PC-3 (cell line): ENCODE measurements at regions of chr1 and their contacts with region 1.

Region 1: DNA sequence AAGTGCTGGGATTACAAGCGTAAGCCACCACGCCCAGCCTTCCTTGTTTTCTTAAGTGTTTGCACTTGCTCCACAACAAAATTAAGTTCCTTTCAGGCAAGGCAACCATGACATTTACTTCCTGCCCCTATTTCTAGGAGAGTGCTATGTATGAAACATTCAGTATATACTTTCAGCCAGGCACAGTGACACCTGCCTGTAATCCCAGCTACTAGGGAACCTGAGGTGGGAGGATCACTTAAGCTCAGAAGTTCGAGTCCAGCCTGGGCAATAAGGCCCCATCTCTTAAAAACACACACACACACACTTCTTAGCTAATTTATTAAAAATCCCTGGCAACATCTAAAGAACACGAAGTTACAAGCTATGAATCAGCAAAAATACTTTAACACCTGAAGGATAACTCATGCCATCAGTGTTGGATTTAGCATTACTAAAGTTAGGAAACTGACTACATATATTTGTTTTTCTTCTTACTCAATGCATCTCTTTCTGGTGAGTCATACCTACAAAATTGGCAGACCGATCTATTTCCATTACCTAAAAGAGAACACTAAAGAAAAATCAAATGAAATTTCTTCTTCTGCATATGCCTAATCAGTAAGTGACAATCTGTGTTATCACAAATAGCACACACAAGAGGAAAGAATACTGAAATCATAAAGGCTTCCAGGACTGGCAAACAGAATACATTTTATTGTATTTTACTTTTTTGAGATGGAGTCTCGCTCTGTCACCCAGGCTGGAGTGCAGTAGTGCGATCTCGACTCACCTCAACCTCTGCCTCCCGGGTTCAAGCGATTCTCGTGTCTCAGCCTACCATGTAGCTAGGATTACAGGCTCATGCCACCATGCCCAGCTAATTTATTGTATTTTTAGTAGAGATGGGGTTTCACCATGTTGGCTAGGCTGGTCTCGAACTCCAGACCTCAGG is 41.5 kb downstream of the RNF115 start:
- DNase-seq: peak; percentile 97
- ATAC-seq: peak; percentile 86
- H3K4me3 ChIP-seq: no peak overlapping the region
- H3K27ac ChIP-seq: peak overlapping the region; percentile 85
- H3K4me1 ChIP-seq: peaks cover 40% of the 10 kb centered on the region
- H3K27me3 ChIP-seq: no peaks in the 10 kb centered on the region
- CTCF ChIP-seq: no peak

Region 2: GRCh38 chr1:145730900-145731299 is 51.5 kb before region 1 on chr1:
- CTCF ChIA-PET with region 1: interaction called, 3 read pairs
- POLR2A ChIA-PET with region 1: interaction called, 30 read pairs
- intact Hi-C with region 1: no loop called
- DNase-seq: peak; percentile 56
- ATAC-seq: peak; percentile 55
- H3K4me3 ChIP-seq: no peak overlapping the region
- H3K27ac ChIP-seq: no peak overlapping the region
- H3K4me1 ChIP-seq: peaks cover 12% of the 10 kb centered on the region
- H3K27me3 ChIP-seq: no peaks in the 10 kb centered on the region
- CTCF ChIP-seq: peak; percentile 59

Region 3: DNA sequence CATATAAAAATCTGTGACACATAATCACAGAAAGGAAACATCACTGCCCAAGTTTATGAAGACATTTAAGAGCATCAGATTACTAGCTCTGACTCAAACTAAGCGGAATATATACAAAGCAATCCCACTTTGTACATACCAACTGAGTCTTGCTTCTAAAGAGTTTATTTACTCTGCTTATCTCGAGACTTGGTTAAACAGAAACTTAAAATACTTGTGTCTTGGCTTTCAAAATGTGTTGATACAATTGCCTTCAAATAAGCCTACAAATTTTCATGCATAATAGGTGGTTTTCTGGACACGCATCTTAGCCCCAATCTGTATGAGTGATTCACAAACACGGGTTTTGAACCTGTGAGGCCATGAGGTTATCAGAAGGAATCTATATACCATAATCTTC is 42.2 kb before region 1 on chr1:
- CTCF ChIA-PET with region 1: interaction called, 3 read pairs
- POLR2A ChIA-PET with region 1: interaction called, 3 read pairs
- intact Hi-C with region 1: loop called (anchors 1 kb)
- DNase-seq: peak; percentile 93
- ATAC-seq: peak; percentile 84
- H3K4me3 ChIP-seq: no peak overlapping the region
- H3K27ac ChIP-seq: peak overlapping the region; percentile 86
- H3K4me1 ChIP-seq: peaks cover 36% of the 10 kb centered on the region
- H3K27me3 ChIP-seq: no peaks in the 10 kb centered on the region
- CTCF ChIP-seq: no peak

Region 4: DNA sequence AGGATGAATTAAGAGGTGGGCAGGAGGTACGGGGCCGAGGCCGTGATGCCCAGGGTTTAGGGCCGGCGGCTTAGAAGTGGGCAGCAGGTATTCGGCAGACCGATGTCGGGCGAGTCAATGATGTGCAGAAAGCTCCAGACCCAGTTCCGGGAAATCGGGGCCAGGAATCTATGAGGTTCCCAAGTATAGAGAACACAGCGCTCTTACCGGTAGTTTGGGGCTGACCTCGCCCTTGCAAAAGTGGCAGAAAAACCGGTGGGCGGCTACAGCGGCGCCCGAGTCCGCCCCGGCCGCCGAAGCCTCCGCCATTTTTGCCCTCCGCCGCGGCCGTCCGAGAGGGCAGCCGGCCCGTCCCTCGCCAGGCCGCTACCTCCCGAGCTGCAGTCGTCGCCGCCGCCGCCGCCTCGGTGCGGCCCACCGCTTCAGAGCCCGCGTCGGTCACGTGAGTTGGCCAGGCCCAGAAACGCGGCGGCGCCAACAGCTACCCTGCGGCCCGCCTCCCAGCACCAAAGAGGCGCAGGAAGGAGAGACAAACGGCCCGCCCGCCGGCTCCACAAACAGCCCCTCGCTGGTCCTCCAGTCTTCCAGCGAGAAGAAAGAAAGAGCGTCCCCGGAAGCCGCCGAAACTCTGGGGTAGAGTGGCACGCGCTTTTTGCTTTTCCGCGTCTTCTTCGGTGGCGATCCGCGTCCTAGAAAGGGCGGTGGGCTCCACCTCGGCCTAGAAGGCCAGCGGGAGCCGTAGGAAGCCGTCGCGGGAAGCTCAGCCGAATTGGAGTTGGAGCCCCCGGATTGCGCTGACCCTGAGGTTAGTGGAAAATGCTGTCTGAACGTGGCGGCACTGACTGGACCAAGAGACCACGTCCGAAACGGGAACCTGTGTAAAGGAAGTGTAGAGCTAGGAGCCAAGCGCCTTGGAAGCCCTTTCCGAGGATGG is 41.4 kb after region 1 on chr1 and contains the starts of genes POLR3C and RNF115:
- CTCF ChIA-PET with region 1: interaction called, 3 read pairs
- POLR2A ChIA-PET with region 1: no interaction called
- intact Hi-C with region 1: loop called (anchors 1 kb)
- DNase-seq: peak; percentile 88
- ATAC-seq: peak; percentile 85
- H3K4me3 ChIP-seq: peak within 1 kb of the TSS; percentile 82
- H3K27ac ChIP-seq: peak within 1 kb of the TSS; percentile 68
- H3K4me1 ChIP-seq: peaks cover 18% of the 10 kb centered on the region
- H3K27me3 ChIP-seq: no peaks in the 10 kb centered on the region
- CTCF ChIP-seq: no peak
- total RNA-seq, gene POLR3C: 35.8 and 41.5 TPM in 2 replicates
- total RNA-seq, gene RNF115: 15.2 and 15.9 TPM in 2 replicates